Heart right ventricle (tissue), 16 donors: ENCODE measurements at regions of chr18 and their contacts with region 1.

Region 1: DNA sequence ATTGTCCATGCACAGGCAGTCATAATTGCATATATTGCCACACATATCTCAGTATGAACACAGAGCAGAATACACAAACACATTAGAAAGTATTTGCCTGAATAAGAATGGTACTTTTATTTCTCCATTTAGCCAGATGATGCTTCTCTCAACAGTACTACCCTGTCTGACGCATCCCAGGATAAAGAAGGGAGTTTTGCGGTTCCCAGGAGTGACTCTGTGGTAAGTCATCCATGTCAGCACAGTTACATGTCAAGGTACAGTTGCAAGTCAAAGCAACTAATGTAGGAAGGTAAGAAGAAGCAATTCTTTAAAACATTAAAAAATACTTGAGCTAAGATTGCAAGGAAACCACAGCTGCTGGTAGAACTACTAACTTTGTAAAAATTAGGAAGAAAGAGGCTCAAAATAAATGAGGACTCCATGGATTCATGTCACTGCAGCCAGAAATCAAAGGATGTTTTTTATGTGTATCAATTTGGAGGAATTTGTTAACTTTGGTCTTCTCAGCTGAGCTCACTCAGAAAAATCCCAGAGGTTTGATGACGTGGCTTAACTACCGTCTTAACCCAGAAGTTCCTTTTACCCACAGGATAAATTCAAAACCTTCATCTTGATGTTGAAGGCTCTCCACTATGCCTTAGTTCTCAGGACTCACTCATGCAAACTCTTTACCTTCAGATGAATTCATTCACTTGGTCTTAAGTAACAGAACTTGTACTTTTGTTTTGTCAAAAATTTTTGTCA is 130.3 kb downstream of the ARHGAP28 start:
- DNase-seq: no peak
- ATAC-seq: no peak
- H3K4me3 ChIP-seq: no peak overlapping the region
- H3K27ac ChIP-seq: no peak overlapping the region
- H3K4me1 ChIP-seq: no peaks in the 10 kb centered on the region
- H3K27me3 ChIP-seq: no peaks in the 10 kb centered on the region
- CTCF ChIP-seq: no peak

Region 2: GRCh38 chr18:6901283-6901926 is 41.6 kb after region 1 on chr18:
- intact Hi-C with region 1: no loop called
- DNase-seq: no peak
- ATAC-seq: no peak
- H3K4me3 ChIP-seq: no peak overlapping the region
- H3K27ac ChIP-seq: no peak overlapping the region
- H3K4me1 ChIP-seq: no peaks in the 10 kb centered on the region
- H3K27me3 ChIP-seq: no peaks in the 10 kb centered on the region
- CTCF ChIP-seq: no peak

Region 3: DNA sequence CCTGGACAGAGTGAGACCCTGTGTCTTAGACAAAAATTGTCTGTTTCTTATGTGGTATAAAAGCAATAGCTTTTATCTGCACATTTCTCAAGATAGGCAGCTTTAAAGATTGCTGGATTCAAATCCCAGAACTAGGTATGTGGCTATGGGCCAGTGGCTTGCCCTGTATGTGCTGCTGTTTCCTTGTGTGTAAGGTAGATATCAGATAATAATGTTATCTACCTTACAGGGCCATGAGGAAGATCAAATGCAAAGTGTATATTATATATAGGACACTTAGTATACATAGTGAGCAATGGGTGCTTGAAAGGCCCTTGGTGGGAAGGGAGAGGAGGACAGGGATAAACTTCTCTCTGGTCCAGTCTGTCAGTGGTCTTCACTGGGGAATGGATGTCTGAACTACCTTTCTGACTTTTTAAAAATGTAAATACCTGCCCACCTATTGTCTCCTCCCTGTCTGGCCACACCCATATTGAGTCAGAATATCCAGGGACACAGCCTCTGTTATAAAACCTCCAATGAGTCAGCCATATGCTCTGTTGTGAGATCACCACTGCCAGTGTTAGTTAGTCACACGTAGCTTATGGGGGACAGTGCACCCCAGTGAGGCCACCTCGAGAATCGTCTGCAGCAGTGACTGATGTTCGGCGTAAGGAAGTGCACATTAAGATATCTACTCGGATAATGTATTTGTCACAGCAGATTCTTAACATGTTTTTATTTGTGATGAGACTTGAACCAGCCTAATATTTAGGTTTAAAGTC is 1090.7 kb after region 1 on chr18:
- intact Hi-C with region 1: loop called in 1 of 10 experiments (anchors 10 kb)
- DNase-seq: no peak
- ATAC-seq: peak in 1 of 8 donors; percentile 25
- H3K4me3 ChIP-seq: no peak overlapping the region
- H3K27ac ChIP-seq: no peak overlapping the region
- H3K4me1 ChIP-seq: peaks cover 0 to 46% (median 19%) of the 10 kb centered on the region in 9 donors
- H3K27me3 ChIP-seq: no peaks in the 10 kb centered on the region
- CTCF ChIP-seq: no peak